ENCODE measurements at regions of chr1 and their contacts with region 1.

Region 1: GRCh38 chr1:94061513-94062443 is 59.2 kb downstream of the ABCA4 start:
- DNase-seq: peak; percentile 63
- ATAC-seq: peak; percentile 80

Region 2: DNA sequence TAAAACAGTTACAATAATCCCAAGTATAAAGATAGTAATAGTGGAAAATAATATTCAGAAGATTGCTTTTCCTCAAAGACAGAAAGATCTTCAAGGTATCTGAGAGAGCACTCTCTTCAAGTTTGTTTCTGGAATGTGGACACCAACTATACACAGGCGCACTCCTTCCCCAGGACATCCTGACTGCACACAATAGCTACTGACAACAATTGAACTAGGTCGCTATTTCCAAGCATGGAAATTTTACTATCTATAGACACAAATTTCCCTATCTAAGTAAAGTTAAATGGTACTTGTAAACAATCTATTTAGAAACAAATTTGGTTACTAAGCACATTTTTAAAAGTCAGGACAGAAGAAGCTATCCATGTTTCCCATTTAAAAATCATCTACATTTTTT is 156.6 kb after region 1 on chr1:
- intact Hi-C with region 1: loop called (anchors 10 kb)
- DNase-seq: no peak
- ATAC-seq: peak; percentile 56

Region 3: DNA sequence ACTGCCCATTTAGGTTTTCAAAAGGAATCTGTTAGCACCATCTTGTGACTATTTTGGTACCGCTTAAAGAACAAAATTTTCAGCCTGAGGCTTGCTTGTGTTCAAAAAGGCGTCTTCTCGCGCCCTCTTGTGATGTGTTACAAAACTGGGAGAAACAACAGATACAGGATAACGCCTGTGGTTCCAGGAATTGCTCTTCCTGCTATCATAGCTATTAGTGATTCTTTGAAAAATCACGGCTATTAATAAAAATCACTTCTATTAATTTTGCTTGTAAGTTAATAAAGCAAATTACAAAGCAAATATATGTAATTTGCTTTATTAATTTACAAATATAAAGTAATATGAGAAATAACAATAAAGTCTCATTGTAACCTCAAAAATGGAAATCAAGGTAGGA is 274.2 kb after region 1 on chr1:
- intact Hi-C with region 1: loop called (anchors 5 kb)
- DNase-seq: peak; percentile 49
- ATAC-seq: peak; percentile 94